ENCODE measurements at regions of chr17 and their contacts with region 1.

Region 1: GRCh38 chr17:28871056-28871579 is 16.3 kb downstream of the ERAL1 start:
- DNase-seq: peak; percentile 67
- H3K4me3 Mint-ChIP-seq: no peak overlapping the region
- H3K27ac Mint-ChIP-seq: peak overlapping the region; percentile 89
- H3K4me1 Mint-ChIP-seq: peaks cover 21% of the 10 kb centered on the region
- H3K27me3 Mint-ChIP-seq: no peaks in the 10 kb centered on the region

Region 2: GRCh38 chr17:28842282-28843012 is 28.7 kb before region 1 on chr17 and contains the start of gene FAM222B:
- CTCF ChIA-PET with region 1: interaction called, 6 read pairs
- POLR2A ChIA-PET with region 1: interaction called, 13 read pairs
- DNase-seq: peak; percentile 88
- H3K4me3 Mint-ChIP-seq: peak within 1 kb of the TSS; percentile 100
- H3K27ac Mint-ChIP-seq: peak within 1 kb of the TSS; percentile 88
- H3K4me1 Mint-ChIP-seq: peaks cover 26% of the 10 kb centered on the region
- H3K27me3 Mint-ChIP-seq: no peaks in the 10 kb centered on the region
- total RNA-seq, gene FAM222B: 15.5 to 17.1 TPM